GM12878 (cell line): ENCODE measurements at regions of chr15 and their contacts with region 1.

Region 1: DNA sequence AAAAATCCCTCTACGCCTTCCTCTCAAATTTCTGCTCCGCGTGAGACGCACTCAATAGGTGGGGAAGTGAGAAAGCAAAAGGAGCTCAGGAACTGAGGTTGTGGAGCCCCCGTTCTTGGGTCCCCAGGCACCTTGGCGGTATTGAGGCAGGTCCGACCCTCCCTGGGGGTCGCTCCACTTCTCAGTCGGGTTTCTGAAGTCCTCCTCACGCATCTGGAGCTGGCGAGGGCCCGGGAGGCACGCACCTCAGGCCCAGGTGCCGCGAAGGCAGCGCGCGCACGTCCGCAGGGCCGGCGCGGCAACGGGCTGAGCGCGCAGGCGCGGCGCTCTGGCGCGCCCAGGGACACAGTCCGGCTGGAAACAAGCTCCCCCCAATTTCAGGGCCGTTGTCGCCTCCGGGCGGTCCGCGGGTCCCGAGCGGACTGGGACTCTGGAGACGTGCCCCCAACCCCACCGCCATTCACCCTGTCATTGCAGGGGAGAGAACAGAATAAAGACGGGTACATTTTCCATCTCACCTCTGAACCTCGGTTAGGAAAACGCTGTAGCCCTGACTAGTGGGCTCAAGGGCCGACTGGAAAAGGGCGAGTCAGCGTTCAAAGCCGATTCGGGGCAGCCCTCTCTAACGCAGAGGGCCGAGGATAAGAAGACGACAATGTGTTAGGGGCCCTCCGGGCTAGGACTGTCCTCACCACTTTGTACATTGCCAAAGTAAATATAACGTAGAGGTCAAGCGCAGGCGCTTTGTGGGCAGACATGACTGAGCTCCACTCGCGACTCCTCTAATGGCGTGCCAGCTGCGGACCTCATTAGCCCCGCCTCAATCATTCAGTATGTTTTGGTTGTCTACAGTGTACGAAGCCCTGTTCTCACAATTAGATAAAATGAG is at the start of gene ZNF770:
- DNase-seq: peak; percentile 44
- ATAC-seq: peak; percentile 87
- H3K4me3 ChIP-seq: peak within 1 kb of the TSS; percentile 97
- H3K27ac ChIP-seq: peak within 1 kb of the TSS; percentile 96
- H3K4me1 ChIP-seq: peaks cover 20% of the 10 kb centered on the region
- H3K27me3 ChIP-seq: no peaks in the 10 kb centered on the region
- CTCF ChIP-seq: no peak
- EP300 ChIP-seq: peak in 1 of 2 experiments; percentile 31; a peak in 1 of 4 replicates
- POLR2A ChIP-seq: peak; percentile 97
- RAD21 ChIP-seq: no peak
- polyA plus RNA-seq, gene ZNF770: 1.8 to 5.6 TPM

Region 2: DNA sequence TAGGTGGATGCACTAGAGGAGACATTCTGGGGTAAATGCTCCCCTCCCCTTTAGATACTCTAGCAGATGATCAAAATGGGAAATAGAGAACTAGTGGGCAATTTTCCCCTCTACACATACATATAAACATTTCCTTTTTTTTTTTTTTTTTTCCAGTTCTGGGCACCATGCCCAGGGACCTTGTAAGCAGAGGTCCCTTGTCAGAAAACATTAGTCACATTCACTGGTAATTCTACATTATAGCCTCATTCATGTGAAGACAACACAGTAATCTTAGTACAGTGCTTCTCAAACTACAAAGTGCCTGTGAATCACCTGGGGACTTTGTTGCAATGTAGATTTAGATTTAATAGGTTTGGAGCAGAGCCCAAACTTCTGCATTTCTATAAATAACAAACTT is 132.8 kb before region 1 on chr15:
- CTCF ChIA-PET with region 1: no interaction called
- POLR2A ChIA-PET with region 1: no interaction called
- RAD21 ChIA-PET with region 1: no interaction called
- SMC1A ChIA-PET with region 1: no interaction called
- in situ Hi-C with region 1: no loop called
- intact Hi-C with region 1: no loop called
- DNase-seq: no peak
- ATAC-seq: no peak
- H3K4me3 ChIP-seq: no peak overlapping the region
- H3K27ac ChIP-seq: no peak overlapping the region
- H3K4me1 ChIP-seq: no peaks in the 10 kb centered on the region
- H3K27me3 ChIP-seq: no peaks in the 10 kb centered on the region
- CTCF ChIP-seq: no peak
- EP300 ChIP-seq: no peak
- POLR2A ChIP-seq: no peak
- RAD21 ChIP-seq: no peak

Region 3: GRCh38 chr15:34969340-34970097 is 18.7 kb before region 1 on chr15 and contains the start of gene AQR:
- CTCF ChIA-PET with region 1: interaction called, 81 read pairs
- POLR2A ChIA-PET with region 1: interaction called, 33 read pairs
- RAD21 ChIA-PET with region 1: interaction called, 19 read pairs
- SMC1A ChIA-PET with region 1: interaction called, 9 read pairs
- in situ Hi-C with region 1: no loop called
- intact Hi-C with region 1: loop called (anchors 1 kb)
- DNase-seq: peak; percentile 87
- ATAC-seq: peak; percentile 98
- H3K4me3 ChIP-seq: peak within 1 kb of the TSS; percentile 81
- H3K27ac ChIP-seq: peak within 1 kb of the TSS; percentile 38
- H3K4me1 ChIP-seq: peaks cover 4% of the 10 kb centered on the region; the same call in 1 of the 2 replicates
- H3K27me3 ChIP-seq: no peaks in the 10 kb centered on the region
- CTCF ChIP-seq: peak; percentile 94 to 95 (median 95)
- EP300 ChIP-seq: no peak; a peak in 1 of 4 replicates
- POLR2A ChIP-seq: peak; percentile 93
- RAD21 ChIP-seq: peak; percentile 53
- polyA plus RNA-seq, gene AQR: 18.2 TPM

Region 4: GRCh38 chr15:34976743-34977142 is 11.5 kb before region 1 on chr15:
- CTCF ChIA-PET with region 1: interaction called, 8 read pairs
- POLR2A ChIA-PET with region 1: interaction called, 8 read pairs
- RAD21 ChIA-PET with region 1: no interaction called
- SMC1A ChIA-PET with region 1: interaction called, 10 read pairs
- in situ Hi-C with region 1: no loop called
- intact Hi-C with region 1: no loop called
- DNase-seq: no peak
- ATAC-seq: no peak
- H3K4me3 ChIP-seq: no peak overlapping the region
- H3K27ac ChIP-seq: no peak overlapping the region
- H3K4me1 ChIP-seq: no peaks in the 10 kb centered on the region
- H3K27me3 ChIP-seq: no peaks in the 10 kb centered on the region
- CTCF ChIP-seq: no peak
- EP300 ChIP-seq: no peak
- POLR2A ChIP-seq: no peak
- RAD21 ChIP-seq: no peak

Region 5: DNA sequence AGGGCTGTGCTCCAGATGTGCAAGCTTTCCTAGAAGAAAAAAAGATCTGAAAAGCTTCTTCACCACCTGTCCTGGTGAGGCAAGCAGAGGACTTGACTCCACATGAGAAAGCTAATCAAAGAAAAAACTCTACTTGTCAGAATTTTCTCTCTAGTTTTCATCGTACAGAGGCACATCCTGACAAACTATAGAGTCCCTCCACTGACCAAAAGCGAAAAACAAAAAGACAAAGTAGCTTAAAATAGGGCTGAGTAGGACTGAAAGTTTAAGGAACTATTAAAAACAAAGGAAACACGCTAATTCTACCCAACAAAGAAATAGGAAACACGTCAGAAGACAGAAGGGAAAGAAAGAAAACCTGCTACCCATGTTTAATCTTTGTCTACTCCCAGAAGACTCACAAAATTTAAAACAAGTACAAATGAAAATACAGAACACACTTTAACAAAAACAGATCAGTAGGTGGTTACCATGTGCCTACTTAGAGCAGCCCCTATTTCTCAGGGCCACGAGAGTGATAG is 70.4 kb after region 1 on chr15:
- CTCF ChIA-PET with region 1: no interaction called
- POLR2A ChIA-PET with region 1: no interaction called
- RAD21 ChIA-PET with region 1: no interaction called
- SMC1A ChIA-PET with region 1: no interaction called
- in situ Hi-C with region 1: no loop called
- intact Hi-C with region 1: loop called (anchors 2 kb)
- DNase-seq: no peak
- ATAC-seq: peak; percentile 65
- H3K4me3 ChIP-seq: 0 out of 2 replicates have a peak overlapping the region, but pooled peaks have one; percentile 1
- H3K27ac ChIP-seq: peak overlapping the region; percentile 77
- H3K4me1 ChIP-seq: peaks cover 8% of the 10 kb centered on the region; the same call in 1 of the 2 replicates
- H3K27me3 ChIP-seq: no peaks in the 10 kb centered on the region
- CTCF ChIP-seq: no peak
- EP300 ChIP-seq: no peak
- POLR2A ChIP-seq: no peak
- RAD21 ChIP-seq: no peak

Region 6: GRCh38 chr15:35107122-35107521 is 118.9 kb after region 1 on chr15:
- CTCF ChIA-PET with region 1: no interaction called
- POLR2A ChIA-PET with region 1: no interaction called
- RAD21 ChIA-PET with region 1: no interaction called
- SMC1A ChIA-PET with region 1: no interaction called
- in situ Hi-C with region 1: no loop called
- intact Hi-C with region 1: no loop called
- DNase-seq: no peak
- ATAC-seq: no peak
- H3K4me3 ChIP-seq: no peak overlapping the region
- H3K27ac ChIP-seq: no peak overlapping the region
- H3K4me1 ChIP-seq: no peaks in the 10 kb centered on the region
- H3K27me3 ChIP-seq: no peaks in the 10 kb centered on the region
- CTCF ChIP-seq: no peak
- EP300 ChIP-seq: no peak
- POLR2A ChIP-seq: no peak
- RAD21 ChIP-seq: no peak

Region 7: DNA sequence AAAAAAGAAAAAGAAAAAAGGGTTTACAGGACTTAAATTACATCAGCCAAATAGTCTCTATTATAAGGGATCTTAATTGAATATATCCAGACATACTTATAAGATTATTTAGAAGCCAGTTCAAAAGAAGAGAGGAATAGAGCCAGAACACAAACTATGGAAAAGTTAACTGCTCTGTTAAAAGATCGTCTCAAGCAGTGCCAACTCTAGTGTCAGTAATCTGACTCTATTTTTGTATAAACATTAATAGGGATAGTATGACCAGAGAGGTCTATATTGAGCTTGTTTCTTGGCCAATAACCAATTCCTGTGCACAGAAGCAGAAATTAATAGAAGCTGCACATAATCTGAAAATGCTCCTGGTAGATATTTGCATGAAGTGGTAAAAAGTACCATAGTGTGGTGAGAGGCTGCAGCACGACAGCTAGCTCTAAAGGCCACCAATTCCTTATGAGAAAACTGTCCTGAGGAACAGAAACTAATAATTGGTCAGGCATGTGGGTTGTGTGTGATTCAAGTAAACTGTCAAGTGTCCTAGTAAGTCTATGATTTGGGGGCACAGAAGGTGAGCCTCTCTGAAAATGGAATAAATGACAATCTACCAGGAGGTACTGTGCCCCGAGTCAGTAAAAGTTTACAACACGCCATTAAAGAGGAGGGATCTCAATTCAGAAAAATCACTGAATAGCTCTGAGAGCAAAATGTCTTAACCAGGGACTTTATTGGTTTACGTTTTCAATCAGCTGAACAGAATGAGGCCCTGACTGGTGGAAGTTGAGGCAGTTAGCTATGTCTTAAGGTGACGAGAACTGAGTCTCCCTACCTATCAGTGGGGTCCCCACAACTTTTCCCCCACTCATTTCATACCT is 148.3 kb after region 1 on chr15:
- CTCF ChIA-PET with region 1: no interaction called
- POLR2A ChIA-PET with region 1: no interaction called
- RAD21 ChIA-PET with region 1: interaction called, 3 read pairs
- SMC1A ChIA-PET with region 1: no interaction called
- in situ Hi-C with region 1: no loop called
- intact Hi-C with region 1: loop called (anchors 10 kb)
- DNase-seq: peak; percentile 94
- ATAC-seq: peak; percentile 99
- H3K4me3 ChIP-seq: no peak overlapping the region
- H3K27ac ChIP-seq: peak overlapping the region; percentile 77; the same call in 1 of the 2 replicates
- H3K4me1 ChIP-seq: peaks cover 10% of the 10 kb centered on the region
- H3K27me3 ChIP-seq: no peaks in the 10 kb centered on the region
- CTCF ChIP-seq: no peak
- EP300 ChIP-seq: peak; percentile 99
- POLR2A ChIP-seq: no peak
- RAD21 ChIP-seq: 0 out of 2 replicates have a peak, but pooled peaks have one; percentile 0